ENCODE measurements at regions of chr1 and their contacts with region 1.

Region 1: GRCh38 chr1:235971571-235972310 is 93.1 kb downstream of the NID1 start:
- DNase-seq: peak; percentile 93 to 96 (median 94)
- H3K4me3 ChIP-seq: peak overlapping the region in 6 of 7 experiments; percentile 44 to 83 (median 60)
- H3K27ac ChIP-seq: peak overlapping the region in 1 of 2 experiments; percentile 72
- H3K4me1 ChIP-seq: peaks cover 7 to 16% (median 10%) of the 10 kb centered on the region in 4 experiments
- H3K27me3 ChIP-seq: no peaks in the 10 kb centered on the region

Region 2: GRCh38 chr1:235866913-235867845 is 104.6 kb before region 1 on chr1:
- CTCF ChIA-PET with region 1: interaction called, 39 read pairs
- POLR2A ChIA-PET with region 1: interaction called, 6 read pairs
- DNase-seq: peak; percentile 91 to 96 (median 95)
- H3K4me3 ChIP-seq: peak overlapping the region; percentile 84 to 94 (median 87)
- H3K27ac ChIP-seq: peak overlapping the region; percentile 70 to 85
- H3K4me1 ChIP-seq: peaks cover 6 to 44% (median 18%) of the 10 kb centered on the region in 4 experiments
- H3K27me3 ChIP-seq: no peaks in the 10 kb centered on the region

Region 3: GRCh38 chr1:235917267-235917811 is 54.4 kb before region 1 on chr1:
- CTCF ChIA-PET with region 1: interaction called, 11 read pairs
- POLR2A ChIA-PET with region 1: no interaction called
- DNase-seq: peak; percentile 90 to 97 (median 97)
- H3K4me3 ChIP-seq: no peak overlapping the region
- H3K27ac ChIP-seq: peak overlapping the region in 1 of 2 experiments; percentile 7
- H3K4me1 ChIP-seq: peaks cover 5 to 27% (median 13%) of the 10 kb centered on the region in 4 experiments
- H3K27me3 ChIP-seq: no peaks in the 10 kb centered on the region

Region 4: DNA sequence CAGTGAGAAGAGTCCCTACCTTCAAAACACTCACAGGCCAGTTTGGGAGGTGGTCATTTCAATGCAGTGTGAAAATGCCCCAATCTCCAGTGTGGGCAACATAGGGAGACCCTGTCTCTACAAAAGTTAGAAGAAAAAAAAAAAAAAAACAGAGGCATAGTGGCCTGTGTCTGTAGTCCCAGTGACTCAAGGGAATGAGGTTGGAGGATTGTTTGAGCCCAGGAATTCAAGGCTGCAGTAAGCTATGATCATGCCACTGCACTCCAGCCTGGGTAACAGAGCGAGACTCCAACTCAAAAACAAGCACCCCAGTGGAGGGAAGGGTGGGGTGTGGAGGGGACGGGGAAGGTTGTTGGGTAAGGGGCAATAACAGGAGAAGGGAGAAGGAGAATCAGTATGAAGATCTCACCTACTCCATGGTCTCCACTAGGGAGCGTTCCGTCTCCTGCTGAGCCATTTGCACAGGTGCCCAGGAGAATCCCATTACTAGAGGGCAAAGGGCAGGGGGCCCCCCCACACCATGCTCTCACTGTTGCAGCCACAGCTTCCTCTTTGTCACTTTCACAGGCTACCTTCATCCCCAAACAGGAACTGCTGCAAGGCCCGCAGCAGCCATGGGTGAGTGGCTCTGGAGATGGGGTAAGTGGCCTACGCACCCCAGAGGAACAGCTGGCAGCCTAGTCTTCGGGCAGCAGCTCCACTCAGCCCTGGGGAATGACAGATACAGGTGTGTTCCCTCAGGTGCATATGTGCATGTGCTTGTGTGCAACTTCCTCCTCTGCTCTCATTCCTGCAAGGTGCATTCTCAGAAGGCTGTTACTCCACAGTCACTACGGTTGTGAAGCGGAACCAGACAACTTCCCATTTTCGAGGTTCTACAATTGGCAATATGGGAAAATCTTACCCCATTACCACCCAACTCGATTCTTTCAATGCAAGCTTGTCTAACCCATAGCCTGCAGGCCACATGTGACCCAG is 17.1 kb before region 1 on chr1:
- CTCF ChIA-PET with region 1: interaction called, 27 read pairs
- POLR2A ChIA-PET with region 1: no interaction called
- DNase-seq: peak; percentile 72 to 93 (median 90)
- H3K4me3 ChIP-seq: peak overlapping the region in 1 of 7 experiments; percentile 39
- H3K27ac ChIP-seq: no peak overlapping the region
- H3K4me1 ChIP-seq: peaks cover 19 to 36% (median 26%) of the 10 kb centered on the region in 4 experiments
- H3K27me3 ChIP-seq: no peaks in the 10 kb centered on the region

Region 5: DNA sequence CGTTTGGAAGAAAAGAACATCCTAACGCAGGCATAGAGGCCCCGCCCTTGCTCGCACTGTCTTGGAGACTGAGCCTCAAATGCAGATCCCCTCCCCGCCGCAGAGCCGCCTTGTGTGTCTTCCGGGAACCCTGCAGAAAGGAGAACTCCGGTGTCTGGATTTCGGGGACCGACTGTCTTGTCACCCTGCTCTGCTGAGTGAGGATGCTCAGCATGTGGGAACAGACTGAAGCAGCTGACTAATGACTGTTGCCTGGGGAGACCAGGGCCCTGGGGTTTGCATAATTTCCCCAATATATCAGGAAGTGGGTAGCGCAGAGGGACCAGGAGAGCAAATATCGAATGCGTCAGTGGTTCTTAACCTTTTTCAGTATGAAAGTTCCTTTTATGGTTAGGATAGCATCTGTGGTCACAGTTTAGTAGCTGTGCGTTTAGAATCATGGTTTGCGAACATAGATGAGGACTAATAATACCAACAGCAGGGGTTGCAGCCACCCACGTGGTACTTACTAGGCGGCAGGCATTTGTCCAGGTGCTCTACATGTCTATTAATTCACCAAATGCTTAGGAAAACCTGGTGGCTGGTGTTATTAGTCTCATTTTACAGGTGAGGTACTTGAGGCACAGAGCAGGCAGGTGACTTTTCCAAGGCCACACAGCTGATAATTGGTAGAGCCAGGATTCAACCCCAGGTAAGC is 184.9 kb after region 1 on chr1:
- CTCF ChIA-PET with region 1: no interaction called
- POLR2A ChIA-PET with region 1: no interaction called
- DNase-seq: peak; percentile 25 to 57 (median 42)
- H3K4me3 ChIP-seq: no peak overlapping the region
- H3K27ac ChIP-seq: no peak overlapping the region
- H3K4me1 ChIP-seq: peaks cover 0 to 7% (median 0%) of the 10 kb centered on the region in 4 experiments
- H3K27me3 ChIP-seq: no peaks in the 10 kb centered on the region

Measured in common myeloid progenitor, CD34-positive (primary cell).